Motor neuron (in vitro differentiated cells): ENCODE measurements at regions of chr1 and their contacts with region 1.

Region 1: GRCh38 chr1:100860397-100860991 is 34.1 kb downstream of the EXTL2 start:
- ATAC-seq: peak in 3 of 8 experiments; percentile 54 to 98 (median 95)
- H3K4me3 ChIP-seq: no peak overlapping the region
- H3K27ac ChIP-seq: no peak overlapping the region
- H3K4me1 ChIP-seq: no peaks in the 10 kb centered on the region

Region 2: DNA sequence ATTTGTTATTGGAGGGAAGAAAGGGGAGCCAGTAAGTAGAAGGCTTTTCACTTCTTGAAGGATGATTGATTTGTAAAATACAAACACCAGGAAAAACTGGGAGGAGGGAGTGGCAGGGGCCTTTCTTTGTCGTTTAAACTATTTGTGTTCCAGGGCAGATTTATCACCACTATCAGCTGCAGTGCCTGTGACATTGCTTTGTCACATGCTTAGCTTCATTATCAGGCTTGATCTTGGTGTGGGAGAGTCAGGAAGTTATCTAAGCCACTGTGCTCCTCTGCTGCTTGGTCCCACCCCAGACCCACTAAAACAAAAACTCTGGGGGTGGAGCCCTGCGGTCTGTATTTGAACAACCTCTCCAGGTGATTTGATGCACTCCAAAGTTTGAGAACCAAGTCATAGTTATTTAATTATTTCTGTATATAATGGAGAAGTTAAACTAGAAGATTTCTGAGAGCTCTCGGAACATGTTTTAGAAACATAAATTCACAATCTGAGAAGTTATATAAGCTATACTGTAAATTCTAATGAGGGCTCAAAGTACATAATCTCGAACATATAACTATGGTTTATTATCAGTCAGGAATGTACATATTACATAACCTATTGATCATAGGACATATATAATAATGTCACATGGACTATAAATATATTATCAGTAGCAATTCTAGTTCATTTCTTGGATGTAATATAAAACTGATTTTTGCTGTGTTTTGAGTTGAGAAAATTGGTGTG is 420.3 kb before region 1 on chr1:
- in situ Hi-C with region 1: no loop called
- ATAC-seq: peak in 6 of 8 experiments; percentile 25 to 100 (median 99)
- H3K4me3 ChIP-seq: no peak overlapping the region
- H3K27ac ChIP-seq: no peak overlapping the region
- H3K4me1 ChIP-seq: peaks cover 14 to 22% of the 10 kb centered on the region in 2 donors

Region 3: GRCh38 chr1:100606438-100606837 is 254.1 kb before region 1 on chr1:
- in situ Hi-C with region 1: loop called in 4 of 9 experiments (anchors 5 to 25 kb)
- ATAC-seq: peak in 4 of 8 experiments; percentile 71 to 87 (median 80)
- H3K4me3 ChIP-seq: no peak overlapping the region
- H3K27ac ChIP-seq: no peak overlapping the region
- H3K4me1 ChIP-seq: no peaks in the 10 kb centered on the region

Region 4: GRCh38 chr1:101344745-101345144 is 484.3 kb after region 1 on chr1:
- in situ Hi-C with region 1: no loop called
- ATAC-seq: peak in 3 of 8 experiments; percentile 10 to 53 (median 47)
- H3K4me3 ChIP-seq: no peak overlapping the region
- H3K27ac ChIP-seq: no peak overlapping the region
- H3K4me1 ChIP-seq: peaks cover 0 to 10% of the 10 kb centered on the region in 2 donors